Activated T-helper 2 cell treated with anti-CD3 and anti-CD28 coated beads, Interferon-gamma antibody, Interleukin-2, Interleukin-4, amounts not matched to agents 10 μg/mL and 5 μg/mL and 100 μg/mL, durations not matched to agents 14 hours and 24 hours and 36 hours (primary cell): ENCODE measurements at regions of chr20 and their contacts with region 1.

Region 1: DNA sequence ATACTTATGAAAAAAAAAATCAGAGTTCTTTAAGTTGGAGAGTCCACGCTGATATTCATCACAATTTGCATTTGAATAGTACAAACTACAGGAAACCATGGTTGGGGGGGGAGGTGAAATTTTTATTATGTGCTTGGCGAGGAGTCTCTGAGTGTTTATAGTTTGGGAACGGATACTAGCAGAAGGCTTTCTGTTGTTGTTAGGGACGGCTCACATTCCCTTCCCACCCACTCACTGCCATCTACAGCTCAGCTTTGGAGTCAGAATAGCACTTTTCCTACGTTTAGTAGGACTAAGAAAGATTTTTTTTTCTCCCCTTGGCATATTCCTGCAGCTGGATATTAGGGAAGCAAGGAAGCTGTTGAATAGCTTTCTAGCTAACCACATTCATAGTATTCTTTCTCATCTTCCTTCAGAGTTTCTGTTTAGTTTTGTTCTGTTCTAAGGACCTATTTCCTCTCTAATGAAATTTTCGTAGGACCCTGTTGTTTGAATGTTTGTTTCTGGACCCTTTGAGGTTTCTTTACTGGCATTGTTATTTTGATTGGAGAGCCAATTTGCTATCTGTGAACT is 235.1 kb upstream of the ZNF217 start:
- DNase-seq: no peak
- H3K4me3 Mint-ChIP-seq: peak overlapping the region; percentile 80
- H3K27ac Mint-ChIP-seq: peak overlapping the region; percentile 95
- H3K4me1 Mint-ChIP-seq: peaks cover 47% of the 10 kb centered on the region
- H3K27me3 Mint-ChIP-seq: no peaks in the 10 kb centered on the region

Region 2: GRCh38 chr20:53813636-53814429 is 14.9 kb before region 1 on chr20:
- intact Hi-C with region 1: loop called (anchors 2 kb)
- DNase-seq: no peak
- H3K4me3 Mint-ChIP-seq: no peak overlapping the region
- H3K27ac Mint-ChIP-seq: no peak overlapping the region
- H3K4me1 Mint-ChIP-seq: peaks cover 28% of the 10 kb centered on the region
- H3K27me3 Mint-ChIP-seq: no peaks in the 10 kb centered on the region

Region 3: GRCh38 chr20:53839423-53840176 is 10.8 kb after region 1 on chr20:
- intact Hi-C with region 1: loop called (anchors 1 kb)
- DNase-seq: peak; percentile 64
- H3K4me3 Mint-ChIP-seq: peak overlapping the region; percentile 73
- H3K27ac Mint-ChIP-seq: peak overlapping the region; percentile 84
- H3K4me1 Mint-ChIP-seq: peaks cover 62% of the 10 kb centered on the region
- H3K27me3 Mint-ChIP-seq: no peaks in the 10 kb centered on the region

Region 4: GRCh38 chr20:53847129-53847836 is 18.5 kb after region 1 on chr20:
- intact Hi-C with region 1: loop called (anchors 2 kb)
- DNase-seq: no peak
- H3K4me3 Mint-ChIP-seq: peak overlapping the region; percentile 59
- H3K27ac Mint-ChIP-seq: peak overlapping the region; percentile 51
- H3K4me1 Mint-ChIP-seq: peaks cover 56% of the 10 kb centered on the region
- H3K27me3 Mint-ChIP-seq: no peaks in the 10 kb centered on the region